ENCODE measurements at regions of chr6 and their contacts with region 1.

Region 1: DNA sequence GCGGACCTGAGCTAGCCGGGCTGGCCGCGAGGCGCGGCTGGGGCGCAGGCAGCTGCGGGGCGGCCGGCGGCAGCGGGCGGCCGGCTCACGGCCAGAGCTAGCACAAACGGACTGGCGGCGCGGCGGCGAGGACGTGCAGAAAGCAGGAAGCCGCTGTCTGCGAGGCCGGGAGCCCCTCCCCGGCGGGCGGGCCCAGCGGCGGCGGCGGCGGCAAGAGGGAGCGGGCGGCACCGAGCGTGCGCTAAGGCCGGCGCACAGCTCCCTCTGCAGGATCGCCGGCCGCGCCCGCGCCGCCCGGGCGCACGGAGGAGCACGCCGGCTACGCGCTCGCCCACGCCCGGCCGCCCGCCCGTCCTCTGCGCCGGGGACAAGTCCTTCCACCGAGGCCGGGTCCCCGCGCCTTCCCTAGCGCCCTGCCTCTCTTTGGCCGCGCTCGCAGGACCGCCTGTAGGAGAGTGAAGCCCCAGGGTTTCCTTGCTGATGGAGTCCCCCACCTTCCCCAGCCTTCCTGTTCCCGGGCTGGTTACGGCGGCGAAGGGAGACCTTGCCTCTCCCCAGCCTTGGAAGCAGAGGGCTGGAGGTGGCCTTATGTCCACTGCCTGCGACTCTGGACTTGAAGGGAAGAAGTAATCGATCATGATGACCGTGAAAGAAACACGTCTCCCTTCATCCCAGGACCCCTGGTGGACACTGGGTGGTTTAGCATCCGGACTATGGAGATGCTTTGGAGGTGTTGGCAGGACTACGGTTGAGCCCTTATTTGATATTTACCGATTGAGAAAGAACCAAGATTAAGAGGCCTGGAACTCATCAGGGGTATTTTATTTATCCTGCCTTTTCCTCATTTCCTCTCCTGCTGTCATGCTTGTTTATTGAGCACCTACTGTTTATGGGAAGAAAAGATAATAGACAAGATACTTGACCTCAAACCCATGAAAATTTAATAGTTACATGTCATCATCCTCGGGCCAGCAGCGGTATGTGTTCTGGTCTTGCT is at the start of gene PREP:
- DNase-seq: peak; percentile 76
- ATAC-seq: peak; percentile 92
- H3K4me3 ChIP-seq: peak within 1 kb of the TSS; percentile 94
- H3K27ac ChIP-seq: peak within 1 kb of the TSS; percentile 64
- H3K4me1 ChIP-seq: peaks cover 20% of the 10 kb centered on the region
- H3K27me3 ChIP-seq: no peaks in the 10 kb centered on the region
- CTCF ChIP-seq: peak; percentile 79
- total RNA-seq, gene PREP: 16.9 and 18.5 TPM in 2 replicates

Region 2: DNA sequence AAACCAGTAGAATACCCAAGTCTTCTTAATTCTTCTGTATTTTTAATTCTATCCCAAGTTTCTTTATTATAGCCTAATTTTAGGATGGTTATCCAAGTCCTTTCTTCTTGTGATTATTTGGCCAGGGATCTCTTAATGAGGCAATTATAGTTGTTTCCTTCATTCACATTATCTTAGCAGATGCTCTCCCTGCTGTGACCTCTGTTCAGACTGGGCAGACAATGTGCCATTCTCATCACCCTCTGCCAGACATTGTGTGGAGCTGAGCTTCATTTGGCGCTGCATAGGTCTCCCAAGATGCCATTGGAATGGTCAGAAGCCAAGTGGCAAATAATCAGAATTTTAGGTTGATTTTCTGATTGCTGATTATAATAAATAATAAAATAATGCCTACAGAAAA is 366.9 kb before region 1 on chr6:
- CTCF ChIA-PET with region 1: no interaction called
- POLR2A ChIA-PET with region 1: no interaction called
- intact Hi-C with region 1: no loop called
- DNase-seq: no peak
- ATAC-seq: no peak
- H3K4me3 ChIP-seq: no peak overlapping the region
- H3K27ac ChIP-seq: no peak overlapping the region
- H3K4me1 ChIP-seq: peaks cover 2% of the 10 kb centered on the region; the same call in 1 of the 2 replicates
- H3K27me3 ChIP-seq: no peaks in the 10 kb centered on the region
- CTCF ChIP-seq: no peak

Region 3: GRCh38 chr6:105326833-105327770 is 76.1 kb before region 1 on chr6:
- CTCF ChIA-PET with region 1: interaction called, 3 read pairs
- POLR2A ChIA-PET with region 1: no interaction called
- intact Hi-C with region 1: loop called (anchors 5 kb)
- DNase-seq: peak; percentile 91
- ATAC-seq: peak; percentile 83
- H3K4me3 ChIP-seq: peak overlapping the region; percentile 59
- H3K27ac ChIP-seq: peak overlapping the region; percentile 100
- H3K4me1 ChIP-seq: peaks cover 47% of the 10 kb centered on the region
- H3K27me3 ChIP-seq: no peaks in the 10 kb centered on the region
- CTCF ChIP-seq: no peak

Region 4: DNA sequence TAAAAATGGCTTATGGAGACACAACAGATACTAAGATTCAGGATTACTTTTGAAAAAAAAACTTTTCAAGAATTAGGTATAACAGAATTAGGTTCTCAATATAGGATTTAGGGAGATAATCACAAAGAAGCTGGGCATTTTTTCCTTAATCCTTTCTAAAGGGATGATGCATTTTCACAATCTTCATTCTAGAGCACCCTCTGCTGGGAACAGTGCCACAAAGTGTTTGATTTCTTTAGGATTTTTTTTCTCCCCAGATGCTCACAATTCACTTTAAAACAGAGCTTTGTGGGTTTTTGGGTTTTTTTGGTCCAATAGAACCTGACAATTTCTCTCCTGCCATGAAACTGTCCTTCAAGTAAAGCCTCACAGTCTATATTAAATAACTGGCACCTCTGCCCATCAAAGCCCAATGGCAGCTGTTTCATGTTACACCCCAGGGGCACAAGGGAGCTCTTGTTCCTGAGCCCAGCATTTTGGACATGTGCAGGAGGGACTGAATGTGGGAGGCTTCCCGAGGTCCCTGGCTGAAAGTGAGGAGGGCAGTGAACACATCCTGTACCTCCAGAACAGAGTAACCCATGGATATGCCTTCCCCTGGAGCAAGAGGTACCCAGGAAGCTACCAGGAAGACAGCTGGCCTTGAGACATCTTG is 40.0 kb before region 1 on chr6:
- CTCF ChIA-PET with region 1: interaction called, 7 read pairs
- POLR2A ChIA-PET with region 1: no interaction called
- intact Hi-C with region 1: loop called (anchors 2 kb)
- DNase-seq: peak; percentile 52
- ATAC-seq: no peak
- H3K4me3 ChIP-seq: no peak overlapping the region
- H3K27ac ChIP-seq: no peak overlapping the region
- H3K4me1 ChIP-seq: peaks cover 17% of the 10 kb centered on the region
- H3K27me3 ChIP-seq: no peaks in the 10 kb centered on the region
- CTCF ChIP-seq: peak; percentile 62

Region 5: GRCh38 chr6:106257195-106257594 is 854.0 kb after region 1 on chr6:
- CTCF ChIA-PET with region 1: no interaction called
- POLR2A ChIA-PET with region 1: no interaction called
- intact Hi-C with region 1: no loop called
- DNase-seq: peak; percentile 62
- ATAC-seq: 0 out of 2 replicates have a peak, but pooled peaks have one; percentile 7
- H3K4me3 ChIP-seq: peak overlapping the region; percentile 34; the same call in 1 of the 2 replicates
- H3K27ac ChIP-seq: peak overlapping the region; percentile 62
- H3K4me1 ChIP-seq: peaks cover 73% of the 10 kb centered on the region
- H3K27me3 ChIP-seq: no peaks in the 10 kb centered on the region
- CTCF ChIP-seq: no peak